GM10248 (cell line): ENCODE measurements at regions of chr19 and their contacts with region 1.

Region 1: GRCh38 chr19:8355631-8356402 is 8.1 kb upstream of the ANGPTL4 start:
- DNase-seq: no peak
- CTCF ChIP-seq: no peak

Region 2: GRCh38 chr19:8324186-8325050 is 31.4 kb before region 1 on chr19:
- CTCF ChIA-PET with region 1: interaction called, 27 read pairs
- POLR2A ChIA-PET with region 1: interaction called, 4 read pairs
- DNase-seq: no peak
- CTCF ChIP-seq: no peak

Region 3: DNA sequence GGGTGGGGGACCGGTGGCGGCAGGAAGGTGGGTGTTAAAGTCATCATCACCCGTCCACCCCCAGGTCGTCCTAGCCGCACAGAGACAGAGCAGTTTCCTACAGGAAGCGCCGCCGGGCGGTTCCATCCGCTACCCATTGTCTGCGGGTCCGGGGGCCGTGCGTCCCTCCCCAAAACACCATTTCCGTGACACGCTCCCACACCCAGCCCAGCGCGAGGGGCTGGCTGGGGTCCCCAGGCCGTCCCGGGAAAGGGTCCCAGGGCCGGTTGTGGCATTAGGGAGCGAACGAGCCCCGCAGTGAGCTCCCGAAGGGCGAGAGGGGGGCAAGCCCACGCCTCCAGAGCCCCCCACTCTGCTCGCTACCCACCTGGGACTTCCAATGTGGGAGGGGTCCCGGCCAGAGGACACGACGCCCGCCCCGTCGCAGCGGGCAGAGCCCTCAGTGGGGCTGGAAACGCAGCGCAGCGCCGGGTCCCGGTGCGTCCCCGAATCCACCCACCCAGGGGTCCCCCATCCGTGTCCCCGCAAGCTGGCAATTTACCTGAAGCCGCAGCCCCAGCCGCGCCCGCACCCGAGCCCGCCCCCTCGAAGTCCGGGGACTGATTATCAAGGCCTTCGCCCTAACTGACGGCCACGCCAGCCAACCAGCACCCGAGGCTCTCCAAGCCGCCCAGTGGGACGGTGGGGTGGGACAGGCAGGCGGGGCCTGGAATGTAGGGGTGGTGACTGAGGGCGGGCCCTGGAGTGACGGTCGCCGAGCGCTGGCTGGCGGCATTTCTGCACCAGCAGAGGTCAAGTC is 12.9 kb before region 1 on chr19 and contains the start of gene KANK3:
- CTCF ChIA-PET with region 1: interaction called, 63 read pairs
- POLR2A ChIA-PET with region 1: no interaction called
- DNase-seq: peak; percentile 99
- CTCF ChIP-seq: no peak

Region 4: GRCh38 chr19:8389891-8390616 is 34.2 kb after region 1 on chr19 and contains the start of gene RAB11B:
- CTCF ChIA-PET with region 1: interaction called, 31 read pairs
- POLR2A ChIA-PET with region 1: no interaction called
- DNase-seq: peak; percentile 99
- CTCF ChIP-seq: no peak

Region 5: DNA sequence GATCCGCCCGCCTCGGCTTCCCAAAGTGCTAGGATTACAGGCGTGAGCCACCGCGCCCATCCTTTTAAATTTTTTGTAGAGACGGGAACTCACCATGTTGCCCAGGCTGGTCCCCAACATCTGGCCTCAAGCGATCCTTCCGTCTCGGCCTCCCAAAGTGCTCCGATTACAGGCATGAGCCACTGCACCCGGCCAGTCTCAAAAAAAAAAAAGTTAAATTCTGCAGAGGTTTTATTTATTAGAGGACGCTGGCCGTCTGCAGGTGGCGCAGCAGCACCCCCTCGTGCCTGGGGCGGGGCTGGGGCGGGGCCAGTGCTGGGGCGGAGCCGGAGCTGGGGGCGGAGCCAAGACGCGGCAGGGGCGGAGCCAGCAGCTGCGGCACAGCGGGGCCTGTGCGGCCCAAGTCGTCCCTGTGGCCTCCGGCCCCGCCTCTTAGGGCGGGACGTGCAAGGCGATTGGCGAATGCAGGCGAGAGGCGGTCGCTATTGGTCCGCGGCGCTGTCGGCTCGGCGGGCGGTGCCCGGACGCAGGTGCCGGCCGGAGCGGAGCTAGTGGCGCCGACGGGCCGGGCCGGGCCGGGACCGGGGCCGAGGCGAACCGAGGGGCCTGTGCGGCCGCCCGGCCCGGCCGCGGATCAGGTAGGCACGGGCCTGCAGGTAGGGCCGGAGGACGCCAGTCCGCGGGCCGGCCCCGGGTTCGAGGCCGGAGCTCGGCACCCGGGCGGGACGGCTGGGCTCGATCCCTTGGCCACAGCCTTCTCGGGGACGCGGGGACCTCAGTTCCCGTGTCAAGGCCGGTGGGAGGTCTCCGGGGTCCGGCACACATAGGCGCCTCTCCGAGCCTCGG is 57.2 kb after region 1 on chr19 and contains the start of gene MARCHF2:
- CTCF ChIA-PET with region 1: interaction called, 24 read pairs
- POLR2A ChIA-PET with region 1: no interaction called
- DNase-seq: peak; percentile 100
- CTCF ChIP-seq: peak; percentile 55

Region 6: GRCh38 chr19:8494158-8494557 is 138.3 kb after region 1 on chr19:
- CTCF ChIA-PET with region 1: no interaction called
- POLR2A ChIA-PET with region 1: no interaction called
- DNase-seq: no peak
- CTCF ChIP-seq: no peak